ENCODE measurements at regions of chr21 and their contacts with region 1.

Region 1: DNA sequence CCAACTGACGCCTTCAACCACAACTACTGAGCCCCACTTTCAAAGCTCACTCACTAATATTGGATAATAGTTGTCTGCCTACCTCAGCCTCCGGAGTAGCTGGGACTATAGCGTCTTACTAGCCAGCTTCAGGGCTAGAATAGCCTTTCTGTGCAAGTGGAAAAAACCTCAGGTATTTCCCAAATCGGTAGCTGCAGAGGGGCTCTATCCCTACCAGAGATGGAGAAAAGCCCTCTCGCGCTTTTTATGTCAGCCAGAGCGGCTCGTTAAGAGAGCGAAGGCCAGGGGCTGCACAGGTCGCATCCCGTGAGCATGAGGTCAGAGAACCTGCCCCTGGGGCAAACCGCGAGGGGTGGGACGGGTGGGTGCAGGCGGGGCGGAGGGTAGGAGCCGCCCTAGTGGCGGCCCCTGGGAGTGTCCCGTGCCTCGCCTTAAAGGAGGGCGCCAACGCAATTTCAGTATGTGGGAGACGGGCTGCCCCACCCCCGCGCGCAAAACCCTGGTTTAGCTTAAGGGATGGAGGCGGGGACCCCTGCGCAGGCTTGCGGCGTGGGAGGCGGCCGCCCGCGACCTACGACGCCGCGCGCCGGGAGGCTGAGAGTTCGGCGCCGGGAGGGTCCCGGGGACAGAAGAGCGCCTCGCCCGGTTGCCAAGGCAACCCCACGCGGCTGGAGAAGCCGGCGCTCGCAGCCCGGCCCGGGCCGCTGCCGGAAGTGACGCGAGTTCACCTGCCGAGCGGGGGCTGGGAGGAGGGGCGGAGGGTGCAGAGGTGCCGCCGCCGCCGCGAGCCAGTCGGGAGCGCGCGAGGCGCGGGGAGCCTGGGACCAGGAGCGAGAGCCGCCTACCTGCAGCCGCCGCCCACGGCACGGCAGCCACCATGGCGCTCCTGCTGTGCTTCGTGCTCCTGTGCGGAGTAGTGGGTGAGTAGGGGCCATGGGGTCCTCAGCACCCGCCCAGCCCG is at the start of gene CXADR:
- DNase-seq: peak; percentile 71
- ATAC-seq: peak; percentile 89
- H3K4me3 ChIP-seq: peak within 1 kb of the TSS; percentile 73 to 78
- H3K27ac ChIP-seq: peak within 1 kb of the TSS; percentile 72
- H3K4me1 ChIP-seq: peaks cover 14 to 29% of the 10 kb centered on the region in 2 experiments
- H3K27me3 ChIP-seq: peaks cover 4% of the 10 kb centered on the region; the same call in 1 of the 2 replicates
- CTCF ChIP-seq: peak in 2 of 3 experiments; percentile 41 to 62; a peak in 4 of 6 replicates
- POLR2A ChIP-seq: peak; percentile 55
- RAD21 ChIP-seq: no peak
- total RNA-seq, gene CXADR: 21.6 TPM

Region 2: GRCh38 chr21:17441370-17441769 is 71.2 kb before region 1 on chr21:
- CTCF ChIA-PET with region 1: no interaction called
- POLR2A ChIA-PET with region 1: no interaction called
- RAD21 ChIA-PET with region 1: no interaction called
- intact Hi-C with region 1: no loop called
- DNase-seq: no peak
- ATAC-seq: no peak
- H3K4me3 ChIP-seq: no peak overlapping the region
- H3K27ac ChIP-seq: no peak overlapping the region
- H3K4me1 ChIP-seq: 0 out of 4 replicates have a peak, but pooled peaks cover 0 to 2% of the 10 kb centered on the region in 2 experiments
- H3K27me3 ChIP-seq: peaks cover 10% of the 10 kb centered on the region; the same call in 1 of the 2 replicates
- CTCF ChIP-seq: no peak
- POLR2A ChIP-seq: no peak
- RAD21 ChIP-seq: no peak

Region 3: DNA sequence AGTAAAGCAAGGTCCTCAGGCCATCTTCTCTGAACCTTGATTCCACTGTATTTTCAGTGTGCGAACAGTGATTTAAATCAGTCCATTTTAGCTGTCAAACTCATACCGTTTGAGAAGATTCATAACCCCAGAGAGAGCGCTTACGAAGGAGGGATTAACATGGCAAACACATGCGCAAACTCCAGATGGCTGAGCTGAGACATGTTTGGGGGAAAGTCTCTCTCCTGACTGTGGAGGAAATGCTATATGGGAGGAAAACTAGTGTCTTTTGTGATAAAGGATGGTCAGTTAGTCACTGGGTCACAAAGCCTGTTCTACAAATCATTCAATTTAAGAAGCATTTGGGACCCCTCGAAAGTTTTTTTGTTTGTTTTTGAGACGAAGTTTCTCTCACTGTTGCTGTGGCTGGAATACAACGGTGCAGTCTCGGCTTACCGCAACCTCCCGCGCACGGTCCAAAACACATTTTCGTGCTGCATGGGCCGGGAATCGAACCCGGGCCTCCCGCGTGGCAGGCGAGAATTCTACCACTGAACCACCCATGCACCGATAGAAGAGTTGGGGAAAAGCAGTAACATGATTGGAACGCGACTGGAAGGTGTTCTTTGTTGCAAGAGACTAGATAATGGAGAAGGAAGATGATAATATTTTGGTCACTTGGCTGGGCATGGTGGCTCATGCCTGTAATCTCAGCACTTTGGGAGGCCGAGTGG is 58.1 kb before region 1 on chr21:
- CTCF ChIA-PET with region 1: no interaction called
- POLR2A ChIA-PET with region 1: no interaction called
- RAD21 ChIA-PET with region 1: no interaction called
- intact Hi-C with region 1: loop called (anchors 1 kb)
- DNase-seq: peak; percentile 89
- ATAC-seq: peak; percentile 94
- H3K4me3 ChIP-seq: peak overlapping the region in 1 of 2 experiments; percentile 15; a peak in 1 of 4 replicates
- H3K27ac ChIP-seq: peak overlapping the region; percentile 58
- H3K4me1 ChIP-seq: peaks cover 10 to 15% of the 10 kb centered on the region in 2 experiments
- H3K27me3 ChIP-seq: no peaks in the 10 kb centered on the region
- CTCF ChIP-seq: no peak
- POLR2A ChIP-seq: no peak
- RAD21 ChIP-seq: no peak

Region 4: DNA sequence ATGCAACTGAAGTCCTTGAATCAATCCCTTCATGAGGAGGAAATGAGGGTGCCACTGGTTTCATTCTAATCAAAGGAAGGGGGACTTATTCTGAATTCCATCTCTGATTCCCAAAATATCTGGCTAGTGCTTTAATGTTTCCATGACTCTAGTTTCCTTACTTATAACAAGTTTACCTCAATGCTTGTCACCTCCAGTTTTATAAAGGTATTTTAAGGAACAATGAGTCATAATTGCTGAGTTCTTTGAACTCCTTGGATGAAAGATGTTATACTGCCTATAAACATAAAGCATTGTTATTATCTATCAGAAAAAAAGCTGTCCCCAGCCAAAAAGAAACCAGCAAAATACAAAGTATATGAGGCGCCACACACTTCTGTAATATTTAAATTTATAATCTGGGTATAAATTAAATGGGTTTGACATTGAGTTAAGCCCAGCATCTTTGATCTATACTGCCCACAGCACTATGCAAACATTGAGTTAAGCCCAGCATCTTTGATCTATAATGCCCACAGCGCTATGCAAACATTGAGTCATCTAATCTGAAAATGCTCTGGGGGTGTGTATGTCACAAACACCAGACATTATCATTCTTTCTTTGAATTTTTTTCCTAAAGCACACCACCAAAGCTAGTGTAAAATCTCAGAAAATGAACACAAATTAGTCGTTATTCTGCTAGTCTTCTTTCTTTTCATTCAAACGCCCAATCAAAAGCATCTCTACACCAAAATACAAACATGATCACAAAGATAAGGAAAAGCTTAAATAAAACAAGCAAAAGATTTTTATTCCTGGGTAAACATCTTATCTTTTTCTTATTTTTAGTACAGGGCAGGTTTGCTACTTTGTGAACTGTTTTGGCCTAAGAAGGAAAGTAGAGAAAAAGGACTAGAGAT is 11.2 kb before region 1 on chr21:
- CTCF ChIA-PET with region 1: interaction called, 11 read pairs
- POLR2A ChIA-PET with region 1: no interaction called
- RAD21 ChIA-PET with region 1: no interaction called
- intact Hi-C with region 1: no loop called
- DNase-seq: peak; percentile 57
- ATAC-seq: peak; percentile 90
- H3K4me3 ChIP-seq: no peak overlapping the region
- H3K27ac ChIP-seq: no peak overlapping the region
- H3K4me1 ChIP-seq: peaks cover 16 to 22% of the 10 kb centered on the region in 2 experiments
- H3K27me3 ChIP-seq: peaks cover 26% of the 10 kb centered on the region
- CTCF ChIP-seq: no peak
- POLR2A ChIP-seq: no peak
- RAD21 ChIP-seq: no peak

Region 5: GRCh38 chr21:17611414-17612022 is 99.0 kb after region 1 on chr21:
- CTCF ChIA-PET with region 1: no interaction called
- POLR2A ChIA-PET with region 1: no interaction called
- RAD21 ChIA-PET with region 1: no interaction called
- intact Hi-C with region 1: loop called (anchors 5 kb)
- DNase-seq: peak; percentile 74
- ATAC-seq: peak; percentile 61
- H3K4me3 ChIP-seq: peak overlapping the region; percentile 93 to 95
- H3K27ac ChIP-seq: peak overlapping the region; percentile 80
- H3K4me1 ChIP-seq: peaks cover 13 to 16% of the 10 kb centered on the region in 2 experiments
- H3K27me3 ChIP-seq: no peaks in the 10 kb centered on the region
- CTCF ChIP-seq: no peak
- POLR2A ChIP-seq: no peak
- RAD21 ChIP-seq: no peak